Naive thymus-derived CD4-positive, alpha-beta T cell (primary cell): ENCODE measurements at regions of chr2 and their contacts with region 1.

Region 1: DNA sequence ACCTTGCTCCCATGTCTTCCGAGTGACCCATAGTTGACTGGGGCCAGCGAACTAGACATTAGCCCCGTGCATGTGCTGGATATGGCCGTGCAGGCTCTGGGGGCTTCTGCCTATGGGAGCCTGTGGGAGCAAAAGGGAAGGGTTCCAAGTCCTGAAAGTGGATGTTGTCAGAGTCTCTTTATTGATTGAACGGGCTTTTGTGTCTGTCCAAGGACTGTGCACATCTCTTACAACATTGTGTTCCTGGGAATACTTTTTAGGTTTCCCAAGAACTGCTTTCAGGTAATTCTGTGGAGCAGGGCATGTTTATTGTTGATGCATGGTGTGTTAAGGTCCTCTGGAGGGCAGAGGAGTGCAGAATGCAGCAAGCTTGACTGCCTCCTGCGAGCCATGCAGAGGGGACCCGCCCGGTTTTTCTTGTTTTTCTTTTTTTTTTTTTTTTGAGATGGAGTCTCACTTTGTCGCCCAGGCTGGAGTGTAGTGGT is 5.0 kb downstream of the RNF144A start:
- DNase-seq: peak in 4 of 9 donors; percentile 23 to 43 (median 34)
- ATAC-seq: peak; percentile 35
- H3K4me3 ChIP-seq: no peak overlapping the region
- H3K4me3 Mint-ChIP-seq: peak overlapping the region in 9 of 10 donors; percentile 28 to 84 (median 61)
- H3K27ac ChIP-seq: peak overlapping the region; percentile 37
- H3K27ac Mint-ChIP-seq: peak overlapping the region in 7 of 9 donors; percentile 25 to 89 (median 72)
- H3K4me1 ChIP-seq: peaks cover 9 to 63% of the 10 kb centered on the region in 2 donors
- H3K4me1 Mint-ChIP-seq: peaks cover 57 to 88% (median 83%) of the 10 kb centered on the region in 7 donors
- H3K27me3 ChIP-seq: no peaks in the 10 kb centered on the region
- H3K27me3 Mint-ChIP-seq: peaks cover 0 to 3% (median 0%) of the 10 kb centered on the region in 5 donors

Region 2: GRCh38 chr2:6934758-6935651 is 12.8 kb after region 1 on chr2:
- CTCF ChIA-PET with region 1: interaction called, 11 read pairs
- POLR2A ChIA-PET with region 1: interaction called, 4 read pairs
- intact Hi-C with region 1: loop called in 1 of 2 experiments (anchors 1 kb)
- DNase-seq: no peak
- ATAC-seq: no peak
- H3K4me3 ChIP-seq: no peak overlapping the region
- H3K4me3 Mint-ChIP-seq: peak overlapping the region; percentile 2 to 68 (median 42)
- H3K27ac ChIP-seq: no peak overlapping the region
- H3K27ac Mint-ChIP-seq: peak overlapping the region; percentile 6 to 88 (median 45)
- H3K4me1 ChIP-seq: peaks cover 3 to 36% of the 10 kb centered on the region in 2 donors
- H3K4me1 Mint-ChIP-seq: peaks cover 35 to 89% (median 81%) of the 10 kb centered on the region in 7 donors
- H3K27me3 ChIP-seq: peaks cover 0 to 2% of the 10 kb centered on the region in 2 donors
- H3K27me3 Mint-ChIP-seq: no peaks in the 10 kb centered on the region